Activated naive CD8-positive, alpha-beta T cell treated with anti-CD3 and anti-CD28 coated beads, Interleukin-2, amount 10 ng/mL, durations not matched to agents 7 days and 5 days (primary cell): ENCODE measurements at regions of chr2 and their contacts with region 1.

Region 1: GRCh38 chr2:151261231-151261976 is at the start of gene RBM43:
- DNase-seq: peak; percentile 89
- ATAC-seq: peak; percentile 95
- H3K4me3 Mint-ChIP-seq: peak within 1 kb of the TSS; percentile 97
- H3K27ac Mint-ChIP-seq: peak within 1 kb of the TSS; percentile 99
- H3K4me1 Mint-ChIP-seq: peaks cover 21% of the 10 kb centered on the region
- H3K27me3 Mint-ChIP-seq: no peaks in the 10 kb centered on the region
- total RNA-seq, gene RBM43: 11.6 to 13.0 TPM

Region 2: DNA sequence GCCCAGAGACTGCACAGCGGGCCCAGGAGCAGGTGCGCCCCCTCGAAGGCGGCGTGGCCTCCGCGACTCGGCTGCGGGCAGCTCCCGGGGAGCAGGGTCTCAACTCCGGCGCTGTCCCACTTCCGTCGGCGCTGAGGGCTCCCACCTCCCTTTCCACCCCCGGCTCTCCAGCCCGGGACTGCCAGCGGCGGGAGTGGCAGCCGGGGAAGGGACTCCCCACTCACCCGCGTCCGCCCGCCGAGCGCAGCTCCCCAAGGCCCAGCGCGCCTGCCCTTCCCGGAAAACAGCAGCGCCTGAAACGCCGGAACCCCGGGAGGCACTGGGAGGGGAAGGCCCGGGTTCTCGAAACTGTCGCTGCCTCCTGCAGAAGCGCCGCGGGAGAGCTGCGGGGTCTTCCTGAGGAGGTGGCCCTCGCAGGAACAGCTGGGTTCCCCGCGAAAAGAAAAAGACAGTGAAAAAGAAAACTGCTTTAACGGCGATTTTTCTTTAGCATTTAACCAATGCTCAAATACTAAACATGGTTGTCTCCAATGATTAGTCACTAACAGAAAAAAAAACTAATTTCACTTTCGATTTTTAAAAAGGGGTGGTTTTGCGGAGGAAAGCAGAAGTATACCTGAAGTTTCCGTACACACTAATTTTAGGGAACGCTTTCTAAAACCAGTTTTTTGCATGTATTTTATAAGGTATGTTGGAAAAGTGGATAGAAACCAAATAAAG is 28.1 kb after region 1 on chr2 and contains the start of gene NMI:
- POLR2A ChIA-PET with region 1: interaction called, 70 read pairs
- DNase-seq: peak; percentile 82
- ATAC-seq: peak; percentile 70
- H3K4me3 Mint-ChIP-seq: peak within 1 kb of the TSS; percentile 95
- H3K27ac Mint-ChIP-seq: peak within 1 kb of the TSS; percentile 98
- H3K4me1 Mint-ChIP-seq: peaks cover 37% of the 10 kb centered on the region
- H3K27me3 Mint-ChIP-seq: peaks cover 4% of the 10 kb centered on the region
- total RNA-seq, gene NMI: 56.0 to 57.1 TPM